ENCODE measurements at regions of chr19 and their contacts with region 1.

Region 1: DNA sequence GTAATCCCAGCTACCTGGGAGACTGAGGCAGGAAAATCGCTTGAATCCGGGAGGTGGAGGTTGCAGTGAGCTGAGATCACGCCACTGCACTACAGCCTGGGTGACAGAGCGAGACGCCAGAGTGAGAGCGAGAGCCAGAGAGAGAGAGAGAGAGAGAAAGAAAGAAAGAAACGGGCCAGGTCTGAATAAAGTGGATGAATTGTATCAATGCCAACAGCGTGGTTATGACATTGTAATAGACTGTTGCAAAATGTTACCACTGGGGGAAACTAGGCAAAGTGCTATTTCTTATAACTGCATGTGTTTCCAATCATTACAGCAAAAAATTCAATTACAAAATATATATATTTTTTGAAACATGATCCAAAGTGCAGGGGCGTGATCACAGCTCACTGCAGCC is 11.8 kb upstream of the BTBD2 start:
- DNase-seq: peak in 1 of 2 donors; percentile 42
- H3K4me3 ChIP-seq: no peak overlapping the region
- H3K27ac ChIP-seq: peak overlapping the region in 1 of 2 donors; percentile 1
- H3K4me1 ChIP-seq: peaks cover 6 to 31% (median 19%) of the 10 kb centered on the region in 4 donors
- H3K27me3 ChIP-seq: no peaks in the 10 kb centered on the region
- CTCF ChIP-seq: peak in 1 of 2 experiments; percentile 10

Region 2: GRCh38 chr19:1929021-1929742 is 98.2 kb before region 1 on chr19:
- intact Hi-C with region 1: no loop called
- DNase-seq: peak; percentile 76 to 83
- H3K4me3 ChIP-seq: peak overlapping the region; percentile 33 to 39
- H3K27ac ChIP-seq: no peak overlapping the region
- H3K4me1 ChIP-seq: peaks cover 0 to 16% (median 11%) of the 10 kb centered on the region in 4 donors
- H3K27me3 ChIP-seq: peaks cover 0 to 30% of the 10 kb centered on the region in 2 donors
- CTCF ChIP-seq: peak; percentile 83 to 90

Region 3: GRCh38 chr19:2014731-2015607 is 12.4 kb before region 1 on chr19:
- intact Hi-C with region 1: no loop called
- DNase-seq: peak in 1 of 2 donors; percentile 79
- H3K4me3 ChIP-seq: peak overlapping the region; percentile 71 to 81
- H3K27ac ChIP-seq: peak overlapping the region; percentile 77 to 84
- H3K4me1 ChIP-seq: peaks cover 4 to 29% (median 23%) of the 10 kb centered on the region in 4 donors
- H3K27me3 ChIP-seq: no peaks in the 10 kb centered on the region
- CTCF ChIP-seq: no peak

Region 4: DNA sequence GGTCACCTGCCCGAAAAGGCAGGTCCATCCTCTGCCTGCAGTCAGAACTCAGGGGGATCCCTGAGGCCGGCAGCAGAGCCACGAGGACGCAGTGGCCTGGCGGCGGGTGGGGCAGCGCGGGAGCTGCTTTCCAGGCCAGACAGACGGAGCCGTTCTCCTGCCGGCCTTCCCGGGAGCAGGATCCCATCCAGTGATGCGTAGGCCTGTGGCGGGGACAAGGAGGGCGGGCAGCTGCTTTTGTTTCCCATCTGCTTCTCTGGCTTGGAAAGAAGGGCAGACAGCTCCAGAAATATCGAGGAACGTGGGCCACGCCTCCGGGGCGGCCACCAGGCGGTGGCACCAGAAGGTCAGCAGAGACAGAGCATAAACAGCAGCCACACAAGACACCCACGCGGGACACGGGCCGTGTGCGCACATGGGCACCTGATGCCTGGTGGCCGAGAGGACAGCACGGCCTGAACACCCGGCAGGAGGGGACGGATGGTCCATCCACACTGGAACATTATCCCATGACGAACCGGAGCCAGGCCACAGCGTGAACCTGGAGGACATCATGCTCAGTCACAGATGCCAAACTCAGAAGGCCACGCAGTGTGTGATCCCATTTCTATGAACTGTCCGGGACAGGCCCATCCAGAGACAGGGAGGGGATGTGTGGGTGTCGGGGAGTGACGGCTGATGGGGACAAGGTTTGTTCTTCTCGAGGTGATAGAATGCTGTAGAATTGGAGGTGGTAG is 37.6 kb after region 1 on chr19:
- intact Hi-C with region 1: loop called (anchors 2 kb)
- DNase-seq: peak; percentile 58 to 87
- H3K4me3 ChIP-seq: peak overlapping the region; percentile 13 to 30
- H3K27ac ChIP-seq: peak overlapping the region; percentile 78 to 84
- H3K4me1 ChIP-seq: peaks cover 6 to 44% (median 31%) of the 10 kb centered on the region in 4 donors
- H3K27me3 ChIP-seq: no peaks in the 10 kb centered on the region
- CTCF ChIP-seq: peak in 1 of 2 experiments; percentile 20

Region 5: DNA sequence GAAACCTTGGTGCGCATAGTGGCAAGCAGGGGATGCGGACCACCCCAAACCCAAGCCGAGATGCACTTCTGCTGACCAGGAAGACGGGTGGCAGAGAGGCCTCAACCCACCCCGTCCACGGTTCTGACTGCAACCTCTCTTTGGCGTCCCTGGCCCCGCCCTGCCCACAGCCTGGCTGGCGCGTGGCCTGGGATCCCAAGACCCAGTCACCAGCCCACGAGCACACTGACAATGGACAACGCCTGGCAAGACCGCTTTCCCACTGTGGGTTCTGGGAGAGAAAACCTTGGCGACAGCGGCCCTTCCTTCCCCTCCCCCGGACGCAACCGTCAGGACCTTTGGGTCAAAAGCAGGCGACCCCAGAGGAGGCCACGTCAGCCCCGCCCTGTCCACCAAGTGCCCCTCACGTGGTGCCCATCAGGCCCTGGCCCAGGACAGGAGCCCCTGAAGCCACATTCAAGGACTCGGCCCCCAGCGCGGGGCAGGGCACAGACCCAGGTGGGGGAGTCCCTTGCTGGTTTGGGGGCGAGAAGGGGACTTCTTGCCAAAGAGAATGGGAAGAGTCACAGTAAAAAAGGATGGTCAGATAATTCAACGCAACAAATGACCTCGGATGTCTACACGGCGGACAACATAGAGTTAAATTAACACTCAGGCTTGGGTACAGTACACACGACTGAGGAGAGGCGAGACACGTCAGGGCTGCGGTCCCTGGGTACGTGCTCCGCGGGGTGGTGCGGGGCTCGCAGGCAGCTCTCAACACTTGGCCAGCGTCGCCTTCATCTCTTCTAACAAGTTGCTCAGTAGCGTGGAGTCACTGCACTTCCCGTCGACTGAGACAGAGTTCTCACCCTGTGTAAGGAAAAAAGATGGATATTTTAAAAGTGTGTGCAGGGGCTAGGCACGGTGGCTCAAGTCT is 74.3 kb after region 1 on chr19:
- intact Hi-C with region 1: no loop called
- DNase-seq: no peak
- H3K4me3 ChIP-seq: no peak overlapping the region
- H3K27ac ChIP-seq: no peak overlapping the region
- H3K4me1 ChIP-seq: peaks cover 4 to 12% (median 10%) of the 10 kb centered on the region in 4 donors
- H3K27me3 ChIP-seq: no peaks in the 10 kb centered on the region
- CTCF ChIP-seq: no peak

Region 6: GRCh38 chr19:2648528-2648937 is 621.2 kb after region 1 on chr19:
- intact Hi-C with region 1: no loop called
- DNase-seq: peak in 1 of 2 donors; percentile 53
- H3K4me3 ChIP-seq: no peak overlapping the region
- H3K27ac ChIP-seq: no peak overlapping the region
- H3K4me1 ChIP-seq: no peaks in the 10 kb centered on the region
- H3K27me3 ChIP-seq: peaks cover 0 to 26% of the 10 kb centered on the region in 2 donors
- CTCF ChIP-seq: peak; percentile 79 to 91

Measured in tibial artery (tissue), 4 donors.